SK-N-SH (cell line): ENCODE measurements at regions of chrX and their contacts with region 1.

Region 1: DNA sequence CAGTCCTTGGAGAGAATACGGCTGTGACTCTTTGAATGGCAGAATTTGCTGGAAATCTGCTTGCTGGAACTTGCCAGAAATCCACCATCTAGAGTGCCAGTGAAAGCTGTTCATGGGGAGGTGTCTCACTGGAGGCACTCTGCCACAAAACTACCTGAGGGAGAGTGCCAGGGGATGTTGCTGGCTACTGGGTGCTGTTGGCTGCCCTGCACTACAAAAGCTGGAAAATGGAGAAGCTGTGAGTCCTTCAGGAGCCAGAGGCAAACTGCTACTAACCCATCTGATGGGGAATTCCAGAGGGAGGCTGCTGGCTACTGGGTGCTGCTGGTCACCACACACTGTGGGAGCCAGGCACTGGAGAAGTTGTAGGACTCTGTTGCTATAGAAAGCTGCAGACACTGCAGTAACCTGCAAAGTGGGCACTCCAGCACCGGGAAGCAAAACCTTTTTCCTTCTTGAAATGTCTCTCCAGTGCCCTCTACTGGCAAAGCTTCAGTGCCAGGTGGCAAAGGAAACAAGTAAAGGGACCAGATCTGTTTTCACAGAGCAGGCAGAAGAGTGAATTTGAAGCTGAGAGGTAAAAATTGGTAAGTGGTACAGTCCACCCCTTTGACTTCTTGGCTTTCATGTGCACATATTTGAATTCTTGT is 47.8 kb upstream of the HSD17B10 start:
- DNase-seq: peak; percentile 58
- H3K4me3 ChIP-seq: no peak overlapping the region
- H3K27ac ChIP-seq: no peak overlapping the region
- H3K4me1 ChIP-seq: no peaks in the 10 kb centered on the region; a peak in 1 of 4 replicates
- H3K27me3 ChIP-seq: peaks cover 11% of the 10 kb centered on the region; the same call in 1 of the 2 replicates
- CTCF ChIP-seq: peak; percentile 81
- EP300 ChIP-seq: no peak
- RAD21 ChIP-seq: peak; percentile 74

Region 2: DNA sequence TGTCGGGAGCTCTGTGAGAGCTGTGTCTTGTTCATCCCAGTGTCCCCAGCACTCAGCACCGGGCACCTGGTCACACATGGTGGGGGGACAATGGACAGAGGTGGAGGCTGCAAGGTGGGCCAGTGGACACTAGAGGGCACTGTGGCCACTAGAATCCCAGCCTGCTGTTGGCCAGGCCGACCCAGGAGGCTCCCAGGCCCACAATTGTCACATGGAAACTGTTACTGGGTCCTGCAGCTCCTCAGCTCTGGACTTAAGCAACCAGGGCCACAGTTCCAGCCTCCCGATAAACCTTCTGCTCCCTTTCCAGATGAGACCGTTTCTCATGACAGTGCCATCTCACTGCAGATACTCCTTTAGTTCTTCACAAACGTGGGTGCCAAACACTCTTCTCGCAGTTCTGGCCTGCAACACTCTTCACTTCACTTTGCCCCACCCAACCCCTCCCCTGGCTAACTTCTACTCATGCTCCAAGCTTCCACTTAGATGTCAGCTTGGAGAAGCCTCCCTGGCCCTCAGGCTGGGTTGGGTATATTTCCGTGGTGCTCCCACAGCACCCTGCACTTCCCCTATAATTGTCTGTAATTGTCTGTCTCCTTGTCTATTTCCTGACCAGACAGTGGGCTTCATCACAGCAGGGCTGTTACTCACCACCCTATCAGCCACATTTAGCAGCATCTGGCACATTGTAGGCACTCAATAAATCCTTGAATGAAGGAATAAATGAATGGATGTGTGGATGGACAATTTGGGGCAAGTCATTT is 197.1 kb before region 1 on chrX:
- CTCF ChIA-PET with region 1: interaction called, 14 read pairs
- POLR2A ChIA-PET with region 1: no interaction called
- DNase-seq: peak; percentile 83
- H3K4me3 ChIP-seq: no peak overlapping the region; a peak in 1 of 4 replicates
- H3K27ac ChIP-seq: peak overlapping the region in 1 of 2 experiments; percentile 41; a peak in 2 of 4 replicates
- H3K4me1 ChIP-seq: peaks cover 34 to 66% of the 10 kb centered on the region in 2 experiments
- H3K27me3 ChIP-seq: no peaks in the 10 kb centered on the region
- CTCF ChIP-seq: peak; percentile 90
- EP300 ChIP-seq: no peak
- RAD21 ChIP-seq: peak; percentile 80

Region 3: GRCh38 chrX:53422086-53422860 is 59.7 kb before region 1 on chrX and contains the start of gene SMC1A:
- CTCF ChIA-PET with region 1: interaction called, 10 read pairs
- POLR2A ChIA-PET with region 1: no interaction called
- DNase-seq: peak; percentile 96
- H3K4me3 ChIP-seq: peak within 1 kb of the TSS; percentile 70 to 85
- H3K27ac ChIP-seq: peak within 1 kb of the TSS; percentile 83 to 87
- H3K4me1 ChIP-seq: peaks cover 5 to 14% of the 10 kb centered on the region in 2 experiments; a peak in 2 of 4 replicates
- H3K27me3 ChIP-seq: no peaks in the 10 kb centered on the region
- CTCF ChIP-seq: no peak
- EP300 ChIP-seq: peak; percentile 33 to 58; a peak in 3 of 4 replicates
- RAD21 ChIP-seq: no peak
- polyA plus RNA-seq, gene SMC1A: 34.6 and 34.9 TPM in 2 replicates

Region 4: GRCh38 chrX:53445977-53446376 is 36.0 kb before region 1 on chrX:
- CTCF ChIA-PET with region 1: interaction called, 10 read pairs
- POLR2A ChIA-PET with region 1: no interaction called
- DNase-seq: peak; percentile 40
- H3K4me3 ChIP-seq: no peak overlapping the region; a peak in 1 of 4 replicates
- H3K27ac ChIP-seq: no peak overlapping the region
- H3K4me1 ChIP-seq: peaks cover 0 to 9% of the 10 kb centered on the region in 2 experiments; a peak in 1 of 4 replicates
- H3K27me3 ChIP-seq: no peaks in the 10 kb centered on the region; the same call in 1 of the 2 replicates
- CTCF ChIP-seq: peak; percentile 70
- EP300 ChIP-seq: no peak
- RAD21 ChIP-seq: peak; percentile 58

Region 5: GRCh38 chrX:53458082-53458481 is 23.9 kb before region 1 on chrX:
- CTCF ChIA-PET with region 1: interaction called, 28 read pairs
- POLR2A ChIA-PET with region 1: no interaction called
- DNase-seq: no peak
- H3K4me3 ChIP-seq: no peak overlapping the region
- H3K27ac ChIP-seq: no peak overlapping the region
- H3K4me1 ChIP-seq: no peaks in the 10 kb centered on the region
- H3K27me3 ChIP-seq: no peaks in the 10 kb centered on the region; the same call in 1 of the 2 replicates
- CTCF ChIP-seq: peak; percentile 38
- EP300 ChIP-seq: no peak
- RAD21 ChIP-seq: peak; percentile 30

Region 6: DNA sequence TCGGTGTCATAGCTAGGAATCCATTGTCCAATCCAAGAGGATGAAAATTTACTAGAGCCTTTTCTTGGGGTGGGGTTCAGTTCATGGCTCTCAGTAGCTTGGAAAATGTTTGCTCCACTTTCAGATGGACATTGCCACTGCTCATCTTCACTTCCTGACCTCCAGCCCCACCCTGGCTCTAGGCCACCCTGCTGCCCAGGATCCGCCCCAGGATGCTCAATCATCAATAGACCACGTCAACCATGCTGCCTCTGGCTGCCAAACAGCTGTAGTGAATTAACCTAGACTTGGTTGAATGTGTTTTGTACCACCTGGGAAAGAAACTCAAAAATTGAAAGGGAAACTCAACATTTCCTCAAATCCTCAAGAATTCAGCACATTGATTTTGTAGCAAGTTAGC is 10.6 kb before region 1 on chrX:
- CTCF ChIA-PET with region 1: interaction called, 29 read pairs
- POLR2A ChIA-PET with region 1: no interaction called
- DNase-seq: no peak
- H3K4me3 ChIP-seq: no peak overlapping the region
- H3K27ac ChIP-seq: no peak overlapping the region
- H3K4me1 ChIP-seq: no peaks in the 10 kb centered on the region
- H3K27me3 ChIP-seq: peaks cover 17% of the 10 kb centered on the region; the same call in 1 of the 2 replicates
- CTCF ChIP-seq: no peak
- EP300 ChIP-seq: no peak
- RAD21 ChIP-seq: no peak

Region 7: DNA sequence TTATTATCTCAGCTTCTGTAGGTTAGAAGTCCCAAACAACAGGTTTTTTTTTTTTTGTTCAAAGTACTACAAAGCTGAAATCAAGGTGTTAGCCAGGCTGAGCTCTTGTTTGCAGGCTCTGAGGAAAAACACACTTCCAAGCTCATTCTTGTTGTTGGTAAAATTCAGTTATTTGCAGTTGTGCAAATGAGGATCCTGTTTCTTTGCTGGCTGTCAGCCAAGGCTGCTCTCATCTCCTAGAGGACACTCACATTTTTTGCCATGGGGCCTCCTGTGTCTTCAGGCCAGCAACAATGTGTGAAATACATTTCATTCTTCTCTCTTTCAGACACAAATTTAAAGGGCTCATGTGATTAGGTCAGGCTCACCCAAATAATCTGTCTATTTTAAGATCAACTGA is 12.5 kb after region 1 on chrX:
- CTCF ChIA-PET with region 1: interaction called, 19 read pairs
- POLR2A ChIA-PET with region 1: no interaction called
- DNase-seq: peak; percentile 17
- H3K4me3 ChIP-seq: no peak overlapping the region
- H3K27ac ChIP-seq: no peak overlapping the region
- H3K4me1 ChIP-seq: no peaks in the 10 kb centered on the region
- H3K27me3 ChIP-seq: peaks cover 14% of the 10 kb centered on the region; the same call in 1 of the 2 replicates
- CTCF ChIP-seq: no peak
- EP300 ChIP-seq: no peak
- RAD21 ChIP-seq: no peak

Region 8: GRCh38 chrX:53631156-53631555 is 149.2 kb after region 1 on chrX:
- CTCF ChIA-PET with region 1: no interaction called
- POLR2A ChIA-PET with region 1: no interaction called
- DNase-seq: no peak
- H3K4me3 ChIP-seq: no peak overlapping the region
- H3K27ac ChIP-seq: peak overlapping the region in 1 of 2 experiments; percentile 12; a peak in 1 of 4 replicates
- H3K4me1 ChIP-seq: no peaks in the 10 kb centered on the region
- H3K27me3 ChIP-seq: no peaks in the 10 kb centered on the region
- CTCF ChIP-seq: no peak
- EP300 ChIP-seq: no peak
- RAD21 ChIP-seq: no peak